ENCODE measurements at regions of chr17 and their contacts with region 1.

Region 1: GRCh38 chr17:40577611-40578065 is 12.4 kb upstream of the CCR7 start:
- DNase-seq: no peak
- ATAC-seq: peak; percentile 72
- H3K4me3 Mint-ChIP-seq: no peak overlapping the region
- H3K27ac Mint-ChIP-seq: peak overlapping the region; percentile 44
- H3K4me1 Mint-ChIP-seq: peaks cover 44% of the 10 kb centered on the region
- H3K27me3 Mint-ChIP-seq: no peaks in the 10 kb centered on the region

Region 2: DNA sequence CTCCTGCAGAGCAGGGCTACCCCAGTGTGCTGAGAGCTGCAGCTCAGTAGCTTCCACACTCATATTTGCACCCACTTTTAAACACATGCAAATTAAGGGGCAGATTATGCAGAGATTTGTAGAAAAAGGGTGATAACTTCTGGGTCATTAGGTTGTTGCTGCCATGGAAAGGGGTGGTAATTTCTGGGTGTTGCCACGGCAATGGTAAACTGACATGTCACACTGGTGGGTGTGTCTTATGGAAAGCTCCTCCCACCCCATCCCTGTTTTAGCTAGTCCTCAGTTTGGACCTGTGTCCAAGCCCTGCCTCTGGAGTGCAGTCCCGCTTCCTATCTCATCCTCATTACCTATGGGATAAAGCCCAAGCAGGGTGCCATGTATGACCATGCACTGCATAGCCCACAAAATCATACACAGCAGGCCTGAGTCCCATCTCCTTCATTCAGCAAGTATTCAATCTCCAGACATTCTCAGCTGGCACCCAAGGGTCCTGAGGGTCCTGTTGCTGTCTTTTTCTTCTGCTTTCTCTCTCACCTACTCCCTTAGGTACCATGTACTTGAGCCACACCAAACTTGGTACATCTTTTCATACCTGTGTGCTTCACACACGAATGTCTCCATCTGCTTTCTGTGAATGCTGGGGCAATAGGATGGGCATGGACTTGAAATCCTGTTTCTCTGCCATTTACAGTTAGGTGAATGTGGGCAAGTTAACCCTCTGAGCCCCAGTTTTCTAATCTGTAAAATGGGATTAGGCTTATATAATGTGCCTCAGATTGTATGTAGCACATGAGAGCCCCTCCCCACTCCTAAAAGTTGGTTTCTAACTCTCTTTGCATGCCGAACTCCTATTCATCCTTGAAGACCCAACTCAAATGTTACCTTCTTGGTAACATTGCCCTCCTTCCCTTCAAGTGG is 104.8 kb before region 1 on chr17:
- CTCF ChIA-PET with region 1: no interaction called
- DNase-seq: no peak
- ATAC-seq: no peak
- H3K4me3 Mint-ChIP-seq: no peak overlapping the region
- H3K27ac Mint-ChIP-seq: no peak overlapping the region
- H3K4me1 Mint-ChIP-seq: peaks cover 4% of the 10 kb centered on the region
- H3K27me3 Mint-ChIP-seq: peaks cover 14% of the 10 kb centered on the region

Region 3: GRCh38 chr17:40485851-40486512 is 91.7 kb before region 1 on chr17:
- CTCF ChIA-PET with region 1: no interaction called
- DNase-seq: no peak
- ATAC-seq: no peak
- H3K4me3 Mint-ChIP-seq: no peak overlapping the region
- H3K27ac Mint-ChIP-seq: no peak overlapping the region
- H3K4me1 Mint-ChIP-seq: peaks cover 46% of the 10 kb centered on the region
- H3K27me3 Mint-ChIP-seq: peaks cover 4% of the 10 kb centered on the region

Region 4: GRCh38 chr17:40499551-40500174 is 78.0 kb before region 1 on chr17:
- CTCF ChIA-PET with region 1: no interaction called
- DNase-seq: no peak
- ATAC-seq: no peak
- H3K4me3 Mint-ChIP-seq: no peak overlapping the region
- H3K27ac Mint-ChIP-seq: no peak overlapping the region
- H3K4me1 Mint-ChIP-seq: no peaks in the 10 kb centered on the region
- H3K27me3 Mint-ChIP-seq: peaks cover 8% of the 10 kb centered on the region

Region 5: GRCh38 chr17:40564883-40565768 is 12.5 kb before region 1 on chr17 and contains the start of gene CCR7:
- CTCF ChIA-PET with region 1: interaction called, 13 read pairs
- DNase-seq: peak; percentile 89
- ATAC-seq: peak; percentile 20
- H3K4me3 Mint-ChIP-seq: peak within 1 kb of the TSS; percentile 77
- H3K27ac Mint-ChIP-seq: peak within 1 kb of the TSS; percentile 93
- H3K4me1 Mint-ChIP-seq: peaks cover 63% of the 10 kb centered on the region
- H3K27me3 Mint-ChIP-seq: peaks cover 7% of the 10 kb centered on the region
- total RNA-seq, gene CCR7: 43.5 to 83.9 TPM